Activated CD4-positive, alpha-beta memory T cell treated with anti-CD3 and anti-CD28 coated beads for 36 hours (primary cell): ENCODE measurements at regions of chr20 and their contacts with region 1.

Region 1: DNA sequence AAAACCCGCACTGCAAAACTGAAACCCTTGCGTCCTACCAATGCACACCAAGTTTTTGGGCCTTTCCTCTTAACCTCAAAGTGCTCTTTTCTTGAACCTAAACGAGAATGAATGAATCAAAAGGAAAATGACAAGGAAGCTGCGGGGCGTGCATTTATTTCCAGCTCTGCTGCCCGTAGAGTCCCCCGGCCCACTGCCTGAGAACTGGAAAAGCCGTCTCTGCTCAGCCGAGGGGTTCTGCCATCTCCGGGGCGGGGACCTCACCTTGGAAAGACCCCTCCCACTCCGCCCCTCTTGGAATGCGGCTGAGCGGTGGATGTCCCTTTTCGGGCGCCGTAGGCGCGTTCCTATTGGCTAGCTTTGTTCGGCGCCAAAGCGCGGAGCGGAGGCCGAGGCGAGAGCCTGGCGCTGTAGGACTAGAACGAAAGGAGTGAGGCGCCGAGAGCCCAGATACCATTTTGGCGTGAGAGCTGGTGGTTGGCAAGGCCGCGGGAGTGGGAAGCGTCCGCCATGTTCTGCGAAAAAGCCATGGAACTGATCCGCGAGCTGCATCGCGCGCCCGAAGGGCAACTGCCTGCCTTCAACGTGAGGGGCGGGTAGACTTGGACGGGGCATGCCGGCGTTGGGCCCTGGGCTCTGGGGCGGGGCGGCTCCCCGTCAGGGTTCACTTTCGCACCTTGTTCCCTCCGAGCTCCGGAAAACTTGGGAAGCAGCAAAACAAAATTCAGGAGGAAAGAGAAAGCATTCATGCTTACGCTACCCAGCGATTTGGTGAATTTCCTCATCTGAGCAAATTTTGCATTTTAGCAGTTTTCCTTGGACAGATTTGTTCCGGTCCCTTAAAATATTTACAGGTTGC is at the start of gene GINS1:
- DNase-seq: peak; percentile 92
- H3K4me3 Mint-ChIP-seq: peak within 1 kb of the TSS; percentile 88
- H3K27ac Mint-ChIP-seq: peak within 1 kb of the TSS; percentile 85
- H3K4me1 Mint-ChIP-seq: peaks cover 17% of the 10 kb centered on the region
- H3K27me3 Mint-ChIP-seq: no peaks in the 10 kb centered on the region
- total RNA-seq, gene GINS1: 31.5 to 32.3 TPM

Region 2: GRCh38 chr20:25160467-25160866 is 247.1 kb before region 1 on chr20:
- CTCF ChIA-PET with region 1: no interaction called
- POLR2A ChIA-PET with region 1: no interaction called
- intact Hi-C with region 1: no loop called
- DNase-seq: no peak
- H3K4me3 Mint-ChIP-seq: no peak overlapping the region
- H3K27ac Mint-ChIP-seq: peak overlapping the region; percentile 19
- H3K4me1 Mint-ChIP-seq: peaks cover 21% of the 10 kb centered on the region
- H3K27me3 Mint-ChIP-seq: peaks cover 13% of the 10 kb centered on the region

Region 3: DNA sequence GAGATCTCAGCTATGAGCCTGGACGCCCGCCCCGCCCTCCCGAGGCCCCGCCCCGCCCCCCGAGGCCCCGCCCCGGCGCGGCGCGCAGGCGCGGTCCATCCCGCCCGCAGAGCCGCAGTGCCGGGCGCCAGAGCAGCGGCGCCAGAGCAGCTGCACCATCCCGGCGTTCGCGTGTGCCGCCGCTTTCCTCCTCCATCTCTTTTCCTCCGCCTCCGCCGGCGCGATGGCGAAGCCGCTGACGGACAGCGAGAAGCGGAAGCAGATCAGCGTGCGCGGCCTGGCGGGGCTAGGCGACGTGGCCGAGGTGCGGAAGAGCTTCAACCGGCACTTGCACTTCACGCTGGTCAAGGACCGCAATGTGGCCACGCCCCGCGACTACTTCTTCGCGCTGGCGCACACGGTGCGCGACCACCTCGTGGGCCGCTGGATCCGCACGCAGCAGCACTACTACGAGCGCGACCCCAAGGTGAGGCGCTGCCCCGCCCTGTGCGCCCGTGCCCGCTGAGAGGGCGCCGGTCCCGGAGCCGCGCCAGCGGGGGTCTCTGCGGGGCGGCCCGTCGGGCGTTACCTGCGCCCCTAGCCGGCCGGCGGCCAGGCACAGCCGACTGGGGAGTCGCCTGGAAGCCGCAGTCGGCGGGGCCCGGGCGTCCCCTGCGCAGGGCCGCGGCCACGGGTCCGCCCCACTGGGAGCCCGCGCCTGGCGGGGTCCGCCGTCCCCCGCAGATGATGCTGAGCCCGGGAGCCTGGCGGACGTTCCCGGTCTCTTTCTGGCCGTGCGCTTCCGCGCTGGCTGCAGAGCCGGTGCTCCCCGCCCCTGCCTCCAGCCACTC is 159.4 kb before region 1 on chr20 and contains the start of gene PYGB:
- CTCF ChIA-PET with region 1: no interaction called
- POLR2A ChIA-PET with region 1: interaction called, 11 read pairs
- intact Hi-C with region 1: no loop called
- DNase-seq: peak; percentile 81
- H3K4me3 Mint-ChIP-seq: peak within 1 kb of the TSS; percentile 91
- H3K27ac Mint-ChIP-seq: peak within 1 kb of the TSS; percentile 88
- H3K4me1 Mint-ChIP-seq: peaks cover 50% of the 10 kb centered on the region
- H3K27me3 Mint-ChIP-seq: no peaks in the 10 kb centered on the region
- total RNA-seq, gene PYGB: 23.4 to 24.0 TPM

Region 4: DNA sequence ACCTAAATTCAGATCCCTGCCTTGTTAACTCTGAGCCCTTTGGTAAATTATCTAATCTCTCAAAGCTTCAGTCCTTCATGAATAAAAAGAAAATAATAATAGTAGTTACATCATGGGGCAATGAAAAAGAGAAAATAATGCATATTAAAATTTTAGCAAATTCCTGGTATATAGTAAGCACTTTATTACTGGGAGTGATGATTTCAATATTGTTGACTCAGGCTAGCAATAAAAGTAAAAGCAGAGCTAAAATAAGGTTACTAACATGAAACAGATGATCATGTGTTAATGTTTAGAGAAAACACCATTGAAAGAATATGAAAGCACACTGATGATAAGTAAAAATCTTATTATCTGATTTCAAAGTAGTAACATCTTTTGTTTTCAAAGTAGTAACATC is 13.6 kb after region 1 on chr20:
- CTCF ChIA-PET with region 1: no interaction called
- POLR2A ChIA-PET with region 1: no interaction called
- intact Hi-C with region 1: loop called (anchors 2 kb)
- DNase-seq: no peak
- H3K4me3 Mint-ChIP-seq: no peak overlapping the region
- H3K27ac Mint-ChIP-seq: no peak overlapping the region
- H3K4me1 Mint-ChIP-seq: peaks cover 12% of the 10 kb centered on the region
- H3K27me3 Mint-ChIP-seq: no peaks in the 10 kb centered on the region